ENCODE measurements at regions of chr7 and their contacts with region 1.

Region 1: GRCh38 chr7:49791088-49791741 is 17.8 kb downstream of the VWC2 start:
- DNase-seq: peak in 1 of 5 donors; percentile 37
- ATAC-seq: peak; percentile 61 to 87 (median 78)
- H3K4me3 ChIP-seq: no peak overlapping the region
- H3K27ac ChIP-seq: peak overlapping the region in 5 of 12 donors; percentile 18 to 56 (median 39)
- H3K4me1 ChIP-seq: peaks cover 0 to 34% (median 8%) of the 10 kb centered on the region in 12 donors
- H3K27me3 ChIP-seq: no peaks in the 10 kb centered on the region
- CTCF ChIP-seq: peak; percentile 17 to 63 (median 50)
- POLR2A ChIP-seq: no peak

Region 2: GRCh38 chr7:49001610-49002033 is 789.6 kb before region 1 on chr7:
- intact Hi-C with region 1: loop called in 1 of 10 experiments (anchors 5 kb)
- DNase-seq: peak in 3 of 5 donors; percentile 9 to 20 (median 18)
- ATAC-seq: peak; percentile 32 to 77 (median 68)
- H3K4me3 ChIP-seq: no peak overlapping the region
- H3K27ac ChIP-seq: no peak overlapping the region
- H3K4me1 ChIP-seq: no peaks in the 10 kb centered on the region
- H3K27me3 ChIP-seq: no peaks in the 10 kb centered on the region
- CTCF ChIP-seq: peak; percentile 32 to 62 (median 46)
- POLR2A ChIP-seq: no peak

Region 3: DNA sequence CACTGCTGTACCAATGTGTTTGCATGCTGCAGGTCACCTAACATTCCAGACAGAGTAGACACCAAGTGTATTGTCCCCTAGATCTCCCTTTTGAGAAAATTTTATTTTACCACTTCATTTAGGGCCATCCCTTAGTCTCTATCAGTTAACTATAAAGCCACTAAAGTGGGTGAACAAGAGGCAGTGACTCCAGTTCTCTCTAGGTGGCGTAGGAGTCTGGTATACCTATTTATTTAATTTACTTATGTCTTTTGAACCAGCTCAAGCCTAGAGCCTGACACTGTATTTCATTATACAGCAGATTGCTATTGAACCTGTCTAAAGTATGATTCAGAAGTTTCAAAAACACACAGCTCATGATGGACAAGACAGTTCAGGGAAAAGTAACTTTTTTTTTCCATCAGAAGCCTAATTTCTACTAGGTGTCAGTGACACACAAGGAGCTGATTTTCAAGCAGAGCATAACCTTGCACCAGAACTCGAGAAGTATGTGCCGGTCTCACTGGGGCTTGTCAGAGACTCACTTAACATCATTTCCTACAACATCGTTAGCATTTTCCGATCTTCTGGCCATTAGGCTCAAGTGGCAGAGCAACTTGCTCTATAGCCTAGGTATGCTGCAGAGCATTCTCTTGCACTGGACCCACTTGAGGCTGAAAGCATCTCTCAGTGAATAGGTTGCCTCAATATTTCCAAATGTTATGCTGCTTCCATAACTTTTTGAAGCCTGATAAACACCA is 691.5 kb before region 1 on chr7:
- intact Hi-C with region 1: loop called in 1 of 10 experiments (anchors 5 kb)
- DNase-seq: no peak
- ATAC-seq: no peak
- H3K4me3 ChIP-seq: no peak overlapping the region
- H3K27ac ChIP-seq: no peak overlapping the region
- H3K4me1 ChIP-seq: no peaks in the 10 kb centered on the region
- H3K27me3 ChIP-seq: no peaks in the 10 kb centered on the region
- CTCF ChIP-seq: peak in 2 of 12 donors; percentile 15 to 24
- POLR2A ChIP-seq: no peak

Region 4: DNA sequence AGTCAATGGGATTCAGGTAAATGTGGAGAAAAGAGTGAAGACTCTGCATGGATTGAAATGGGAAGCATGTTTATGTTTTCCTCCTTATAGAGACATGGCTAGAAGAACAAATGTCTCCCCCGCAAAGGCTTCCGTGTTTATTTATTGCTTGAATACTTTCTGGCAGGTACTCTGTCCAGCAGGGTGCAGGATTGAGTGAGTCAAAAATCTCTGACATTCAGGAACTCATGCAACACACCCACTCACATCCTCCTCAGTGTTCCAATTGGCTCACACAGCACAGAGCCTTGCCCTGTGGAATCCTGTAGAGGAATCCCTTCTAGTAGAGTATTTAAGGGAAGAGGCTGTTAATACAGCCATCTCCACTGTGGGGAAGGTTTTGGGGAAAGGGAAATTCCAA is 308.1 kb before region 1 on chr7:
- intact Hi-C with region 1: loop called in 9 of 10 experiments (anchors 2 to 10 kb)
- DNase-seq: peak in 3 of 5 donors; percentile 10 to 42 (median 28)
- ATAC-seq: peak in 3 of 4 donors; percentile 58 to 89 (median 86)
- H3K4me3 ChIP-seq: no peak overlapping the region
- H3K27ac ChIP-seq: no peak overlapping the region
- H3K4me1 ChIP-seq: peaks cover 0 to 6% (median 0%) of the 10 kb centered on the region in 12 donors
- H3K27me3 ChIP-seq: no peaks in the 10 kb centered on the region
- CTCF ChIP-seq: peak in 9 of 12 donors; percentile 25 to 45 (median 35)
- POLR2A ChIP-seq: no peak

Region 5: GRCh38 chr7:49624611-49625010 is 166.6 kb before region 1 on chr7:
- intact Hi-C with region 1: loop called in 1 of 10 experiments (anchors 5 kb)
- DNase-seq: no peak
- ATAC-seq: peak in 3 of 4 donors; percentile 63 to 84 (median 82)
- H3K4me3 ChIP-seq: no peak overlapping the region
- H3K27ac ChIP-seq: peak overlapping the region in 10 of 12 donors; percentile 0 to 87 (median 60)
- H3K4me1 ChIP-seq: peaks cover 0 to 36% (median 7%) of the 10 kb centered on the region in 12 donors
- H3K27me3 ChIP-seq: no peaks in the 10 kb centered on the region
- CTCF ChIP-seq: no peak
- POLR2A ChIP-seq: no peak

Region 6: GRCh38 chr7:49635800-49636199 is 155.4 kb before region 1 on chr7:
- intact Hi-C with region 1: loop called in 1 of 10 experiments (anchors 5 kb)
- DNase-seq: no peak
- ATAC-seq: no peak
- H3K4me3 ChIP-seq: no peak overlapping the region
- H3K27ac ChIP-seq: no peak overlapping the region
- H3K4me1 ChIP-seq: peaks cover 0 to 16% (median 9%) of the 10 kb centered on the region in 12 donors
- H3K27me3 ChIP-seq: no peaks in the 10 kb centered on the region
- CTCF ChIP-seq: peak in 8 of 12 donors; percentile 4 to 37 (median 15)
- POLR2A ChIP-seq: no peak

Region 7: GRCh38 chr7:49852619-49853462 is 61.6 kb after region 1 on chr7:
- intact Hi-C with region 1: loop called in 1 of 10 experiments (anchors 5 kb)
- DNase-seq: no peak
- ATAC-seq: peak; percentile 44 to 82 (median 68)
- H3K4me3 ChIP-seq: no peak overlapping the region
- H3K27ac ChIP-seq: peak overlapping the region in 1 of 12 donors; percentile 11
- H3K4me1 ChIP-seq: peaks cover 0 to 24% (median 1%) of the 10 kb centered on the region in 12 donors
- H3K27me3 ChIP-seq: no peaks in the 10 kb centered on the region
- CTCF ChIP-seq: peak; percentile 41 to 73 (median 70)
- POLR2A ChIP-seq: no peak

Region 8: DNA sequence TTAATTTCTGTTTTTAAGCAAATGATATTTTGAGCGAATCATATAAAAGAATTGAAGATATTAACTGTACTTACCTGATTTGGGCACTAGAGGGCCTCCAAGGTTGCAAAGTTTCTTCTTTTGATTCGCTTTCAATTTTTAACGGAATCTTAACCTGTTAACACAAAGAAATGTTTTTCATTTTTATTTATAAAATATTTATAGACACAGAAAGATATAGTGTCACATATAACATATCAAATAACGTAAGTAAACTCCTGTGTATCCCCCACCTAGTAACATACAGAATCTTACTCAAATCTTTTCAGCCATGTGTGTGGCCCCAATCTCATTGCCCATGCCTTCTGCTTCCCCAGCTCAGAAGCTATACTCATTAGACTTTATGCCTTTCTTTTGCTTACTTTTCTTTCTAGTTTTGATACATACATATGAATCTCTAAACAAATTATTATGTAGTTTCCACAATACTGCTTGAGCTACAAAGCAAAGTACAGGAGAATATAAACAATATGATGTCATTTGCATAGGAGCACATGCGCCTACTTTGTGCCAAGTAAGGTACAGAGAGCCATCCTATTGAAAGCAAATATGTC is 351.3 kb after region 1 on chr7:
- intact Hi-C with region 1: no loop called
- DNase-seq: no peak
- ATAC-seq: no peak
- H3K4me3 ChIP-seq: no peak overlapping the region
- H3K27ac ChIP-seq: no peak overlapping the region
- H3K4me1 ChIP-seq: peaks cover 0 to 4% (median 0%) of the 10 kb centered on the region in 12 donors
- H3K27me3 ChIP-seq: peaks cover 0 to 9% (median 0%) of the 10 kb centered on the region in 9 donors
- CTCF ChIP-seq: peak; percentile 54 to 81 (median 72)
- POLR2A ChIP-seq: no peak